Motor neuron (in vitro differentiated cells): ENCODE measurements at regions of chr16 and their contacts with region 1.

Region 1: GRCh38 chr16:55760310-55761001 is 72.4 kb downstream of the CES1 start:
- ATAC-seq: peak in 3 of 8 experiments; percentile 28 to 81 (median 75)
- H3K4me3 ChIP-seq: peak overlapping the region in 1 of 5 donors; percentile 6
- H3K27ac ChIP-seq: no peak overlapping the region
- H3K4me1 ChIP-seq: peaks cover 0 to 3% of the 10 kb centered on the region in 2 donors

Region 2: DNA sequence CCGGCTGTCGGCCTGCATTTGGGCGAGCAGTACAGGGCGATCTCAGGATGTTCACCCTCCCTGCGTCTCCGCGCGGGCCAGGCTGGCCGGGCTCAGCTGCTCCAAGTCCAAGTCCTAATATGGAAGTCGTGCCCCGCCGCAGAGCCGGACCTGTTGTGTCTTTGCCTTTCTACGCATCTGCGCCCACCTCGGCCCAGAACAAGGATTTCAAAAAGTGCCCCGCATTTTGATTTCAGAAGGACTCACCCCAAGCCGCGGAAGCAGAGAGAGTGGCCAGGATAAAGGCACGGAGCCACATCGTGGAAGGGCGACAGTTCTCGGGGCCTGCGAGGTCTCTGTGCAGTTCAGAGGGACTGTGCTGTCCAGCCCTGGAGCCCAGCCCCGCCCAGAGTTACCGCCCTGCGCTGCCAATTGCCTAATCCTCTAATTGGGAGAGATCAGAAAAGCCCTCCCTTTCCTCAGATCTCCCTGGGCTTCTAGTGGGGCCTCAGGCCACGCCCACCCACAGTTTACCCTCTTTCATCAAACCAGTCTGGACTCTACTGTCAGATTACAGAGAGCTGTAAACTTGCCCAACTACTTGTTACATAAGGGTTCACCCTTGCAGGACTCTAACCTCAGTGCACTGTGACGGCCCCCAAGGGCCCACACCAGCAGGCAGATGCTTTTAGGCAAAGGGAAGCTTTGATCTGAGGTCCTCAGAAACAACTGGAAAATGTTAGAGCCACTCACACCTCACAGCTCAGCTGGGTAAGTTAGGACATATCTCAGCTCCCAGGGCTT is 72.5 kb after region 1 on chr16 and contains the start of gene CES1:
- in situ Hi-C with region 1: loop called in 1 of 9 experiments (anchors 10 kb)
- ATAC-seq: peak in 7 of 8 experiments; percentile 19 to 92 (median 66)
- H3K4me3 ChIP-seq: no peak within 1 kb of the TSS
- H3K27ac ChIP-seq: no peak within 1 kb of the TSS
- H3K4me1 ChIP-seq: no peaks in the 10 kb centered on the region
- total RNA-seq, gene CES1: 0.14 to 19.9 (median 2.3) TPM in 4 of 8 experiments, not detected in the others

Region 3: GRCh38 chr16:57141822-57142631 is 1381.6 kb after region 1 on chr16:
- in situ Hi-C with region 1: no loop called
- ATAC-seq: no peak
- H3K4me3 ChIP-seq: no peak overlapping the region
- H3K27ac ChIP-seq: no peak overlapping the region
- H3K4me1 ChIP-seq: peaks cover 2 to 24% of the 10 kb centered on the region in 2 donors